ENCODE measurements at regions of chr12 and their contacts with region 1.

Region 1: DNA sequence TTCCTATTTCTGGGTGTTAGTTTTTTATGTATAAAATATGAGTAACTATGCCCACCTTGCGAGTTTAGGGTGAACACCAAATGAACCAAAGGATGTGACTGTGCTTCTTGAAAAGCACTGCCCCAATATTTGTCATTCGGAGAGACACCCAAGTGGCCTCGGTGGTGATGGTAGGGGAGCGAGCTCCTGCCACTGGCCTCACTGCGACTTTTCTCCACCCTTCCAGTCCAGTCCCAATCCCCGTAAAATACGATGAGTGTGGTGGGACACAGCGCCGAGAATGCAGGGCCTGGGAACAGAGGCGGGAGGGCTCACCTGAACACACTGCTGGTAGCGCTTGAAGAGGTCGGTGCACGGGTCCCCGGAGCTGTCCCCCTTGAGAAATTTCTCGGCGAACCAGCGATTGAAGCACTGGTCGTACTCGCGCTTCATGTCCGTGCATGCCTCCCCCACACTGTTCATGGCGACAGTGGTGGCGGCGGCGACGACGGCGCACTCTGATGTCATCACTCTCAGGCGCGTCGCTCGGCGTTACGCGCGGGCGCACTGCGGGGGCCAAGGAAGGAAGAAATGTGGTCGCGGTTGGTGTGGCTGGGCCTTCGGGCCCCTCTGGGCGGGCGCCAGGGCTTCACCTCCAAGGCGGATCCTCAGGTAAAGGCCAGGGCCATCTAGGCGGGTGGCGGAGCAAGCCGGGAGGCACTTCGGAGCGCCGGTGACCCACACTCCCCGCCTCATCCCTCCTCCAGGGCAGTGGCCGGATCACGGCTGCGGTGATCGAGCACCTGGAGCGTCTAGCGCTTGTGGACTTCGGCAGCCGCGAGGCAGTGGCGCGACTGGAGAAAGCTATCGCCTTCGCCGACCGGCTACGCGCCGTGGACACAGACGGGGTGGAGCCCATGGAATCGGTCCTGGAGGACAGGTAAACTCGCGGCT is at the starts of genes GATC and TRIAP1:
- DNase-seq: peak; percentile 91 to 93
- ATAC-seq: peak; percentile 95 to 97 (median 95)
- H3K4me3 ChIP-seq: peak within 1 kb of the TSS; percentile 91
- H3K4me3 Mint-ChIP-seq: peak within 1 kb of the TSS; percentile 99
- H3K27ac ChIP-seq: peak within 1 kb of the TSS; percentile 85
- H3K27ac Mint-ChIP-seq: peak within 1 kb of the TSS; percentile 95 to 96
- H3K4me1 ChIP-seq: peaks cover 21% of the 10 kb centered on the region
- H3K4me1 Mint-ChIP-seq: peaks cover 25 to 27% of the 10 kb centered on the region in 2 donors
- H3K27me3 ChIP-seq: no peaks in the 10 kb centered on the region
- H3K27me3 Mint-ChIP-seq: no peaks in the 10 kb centered on the region
- CTCF ChIP-seq: no peak
- total RNA-seq, gene GATC: 16.5 to 22.8 (median 20.5) TPM
- total RNA-seq, gene TRIAP1: 21.3 to 25.8 (median 24.2) TPM

Region 2: GRCh38 chr12:120534203-120534702 is 88.1 kb after region 1 on chr12 and contains the start of gene RNF10:
- intact Hi-C with region 1: loop called (anchors 2 kb)
- DNase-seq: peak; percentile 69 to 92
- ATAC-seq: peak; percentile 71 to 85 (median 80)
- H3K4me3 ChIP-seq: peak within 1 kb of the TSS; percentile 46
- H3K4me3 Mint-ChIP-seq: peak within 1 kb of the TSS; percentile 97
- H3K27ac ChIP-seq: peak within 1 kb of the TSS; percentile 40
- H3K27ac Mint-ChIP-seq: peak within 1 kb of the TSS; percentile 92 to 97
- H3K4me1 ChIP-seq: peaks cover 47% of the 10 kb centered on the region
- H3K4me1 Mint-ChIP-seq: peaks cover 46 to 53% of the 10 kb centered on the region in 2 donors
- H3K27me3 ChIP-seq: no peaks in the 10 kb centered on the region
- H3K27me3 Mint-ChIP-seq: no peaks in the 10 kb centered on the region
- CTCF ChIP-seq: no peak
- total RNA-seq, gene RNF10: 371 to 488 (median 389) TPM